Naive thymus-derived CD4-positive, alpha-beta T cell (primary cell): ENCODE measurements at regions of chr6 and their contacts with region 1.

Region 1: GRCh38 chr6:45156075-45156474 is 172.1 kb upstream of the RUNX2 start:
- DNase-seq: peak in 7 of 9 donors; percentile 46 to 81 (median 76)
- ATAC-seq: peak; percentile 96
- H3K4me3 ChIP-seq: no peak overlapping the region
- H3K4me3 Mint-ChIP-seq: peak overlapping the region in 9 of 10 donors; percentile 0 to 63 (median 39)
- H3K27ac ChIP-seq: no peak overlapping the region
- H3K27ac Mint-ChIP-seq: peak overlapping the region in 8 of 9 donors; percentile 27 to 89 (median 60)
- H3K4me1 ChIP-seq: peaks cover 7 to 12% of the 10 kb centered on the region in 2 donors
- H3K4me1 Mint-ChIP-seq: peaks cover 2 to 43% (median 29%) of the 10 kb centered on the region in 7 donors
- H3K27me3 ChIP-seq: no peaks in the 10 kb centered on the region
- H3K27me3 Mint-ChIP-seq: no peaks in the 10 kb centered on the region

Region 2: GRCh38 chr6:44925100-44925739 is 230.9 kb before region 1 on chr6:
- CTCF ChIA-PET with region 1: no interaction called
- POLR2A ChIA-PET with region 1: no interaction called
- intact Hi-C with region 1: loop called in 1 of 2 experiments (anchors 2 kb)
- DNase-seq: peak in 7 of 9 donors; percentile 33 to 82 (median 64)
- ATAC-seq: peak; percentile 95
- H3K4me3 ChIP-seq: peak overlapping the region; percentile 22
- H3K4me3 Mint-ChIP-seq: peak overlapping the region in 9 of 10 donors; percentile 5 to 60 (median 43)
- H3K27ac ChIP-seq: peak overlapping the region; percentile 67
- H3K27ac Mint-ChIP-seq: peak overlapping the region; percentile 22 to 80 (median 51)
- H3K4me1 ChIP-seq: peaks cover 19 to 35% of the 10 kb centered on the region in 2 donors
- H3K4me1 Mint-ChIP-seq: peaks cover 25 to 63% (median 51%) of the 10 kb centered on the region in 7 donors
- H3K27me3 ChIP-seq: no peaks in the 10 kb centered on the region
- H3K27me3 Mint-ChIP-seq: no peaks in the 10 kb centered on the region

Region 3: GRCh38 chr6:45001663-45002062 is 154.4 kb before region 1 on chr6:
- CTCF ChIA-PET with region 1: no interaction called
- POLR2A ChIA-PET with region 1: no interaction called
- intact Hi-C with region 1: loop called in 1 of 2 experiments (anchors 5 kb)
- DNase-seq: peak in 3 of 9 donors; percentile 19 to 22 (median 21)
- ATAC-seq: peak; percentile 74
- H3K4me3 ChIP-seq: no peak overlapping the region
- H3K4me3 Mint-ChIP-seq: peak overlapping the region in 5 of 10 donors; percentile 8 to 49 (median 13)
- H3K27ac ChIP-seq: peak overlapping the region; percentile 2
- H3K27ac Mint-ChIP-seq: peak overlapping the region in 7 of 9 donors; percentile 14 to 87 (median 59)
- H3K4me1 ChIP-seq: peaks cover 4 to 7% of the 10 kb centered on the region in 2 donors
- H3K4me1 Mint-ChIP-seq: peaks cover 7 to 36% (median 26%) of the 10 kb centered on the region in 7 donors
- H3K27me3 ChIP-seq: no peaks in the 10 kb centered on the region
- H3K27me3 Mint-ChIP-seq: no peaks in the 10 kb centered on the region

Region 4: GRCh38 chr6:45116714-45117410 is 39.2 kb before region 1 on chr6:
- CTCF ChIA-PET with region 1: no interaction called
- POLR2A ChIA-PET with region 1: interaction called, 3 read pairs
- intact Hi-C with region 1: loop called in 1 of 2 experiments (anchors 5 kb)
- DNase-seq: no peak
- ATAC-seq: no peak
- H3K4me3 ChIP-seq: no peak overlapping the region
- H3K4me3 Mint-ChIP-seq: peak overlapping the region in 4 of 10 donors; percentile 7 to 28 (median 8)
- H3K27ac ChIP-seq: no peak overlapping the region
- H3K27ac Mint-ChIP-seq: peak overlapping the region in 2 of 9 donors; percentile 6 to 16
- H3K4me1 ChIP-seq: peaks cover 5% of the 10 kb centered on the region in 2 donors
- H3K4me1 Mint-ChIP-seq: peaks cover 10 to 25% (median 21%) of the 10 kb centered on the region in 7 donors
- H3K27me3 ChIP-seq: no peaks in the 10 kb centered on the region
- H3K27me3 Mint-ChIP-seq: no peaks in the 10 kb centered on the region

Region 5: GRCh38 chr6:45310118-45310788 is 154.2 kb after region 1 on chr6:
- CTCF ChIA-PET with region 1: interaction called, 8 read pairs
- POLR2A ChIA-PET with region 1: no interaction called
- intact Hi-C with region 1: loop called in 1 of 2 experiments (anchors 5 kb)
- DNase-seq: peak in 8 of 9 donors; percentile 24 to 71 (median 60)
- ATAC-seq: peak; percentile 76
- H3K4me3 ChIP-seq: peak overlapping the region; percentile 32
- H3K4me3 Mint-ChIP-seq: peak overlapping the region; percentile 63 to 84 (median 80)
- H3K27ac ChIP-seq: peak overlapping the region; percentile 44
- H3K27ac Mint-ChIP-seq: peak overlapping the region; percentile 85 to 95 (median 90)
- H3K4me1 ChIP-seq: peaks cover 14 to 33% of the 10 kb centered on the region in 2 donors
- H3K4me1 Mint-ChIP-seq: peaks cover 39 to 86% (median 78%) of the 10 kb centered on the region in 7 donors
- H3K27me3 ChIP-seq: no peaks in the 10 kb centered on the region
- H3K27me3 Mint-ChIP-seq: no peaks in the 10 kb centered on the region

Region 6: DNA sequence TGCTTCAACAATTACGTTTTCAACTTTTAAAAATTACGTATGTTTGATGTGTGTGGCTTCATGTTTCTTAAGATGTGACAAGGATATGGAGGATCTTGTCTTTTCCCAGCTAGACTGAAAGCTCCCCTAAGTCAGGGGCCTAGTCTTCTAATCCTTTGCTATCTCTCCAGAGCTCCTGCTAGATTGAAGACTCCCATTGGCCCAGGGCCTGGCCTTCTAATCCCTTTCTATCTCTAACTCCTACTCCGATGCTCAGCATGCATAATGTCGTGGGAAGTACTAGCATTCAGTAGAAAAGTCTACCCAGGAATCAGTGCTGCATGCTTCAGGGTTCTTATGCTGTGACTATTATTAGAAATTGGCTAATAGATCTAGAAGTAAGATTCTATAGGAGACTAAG is 366.4 kb after region 1 on chr6:
- CTCF ChIA-PET with region 1: no interaction called
- POLR2A ChIA-PET with region 1: no interaction called
- intact Hi-C with region 1: no loop called
- DNase-seq: no peak
- ATAC-seq: no peak
- H3K4me3 ChIP-seq: no peak overlapping the region
- H3K4me3 Mint-ChIP-seq: no peak overlapping the region
- H3K27ac ChIP-seq: no peak overlapping the region
- H3K27ac Mint-ChIP-seq: no peak overlapping the region
- H3K4me1 ChIP-seq: no peaks in the 10 kb centered on the region
- H3K4me1 Mint-ChIP-seq: peaks cover 8 to 18% (median 15%) of the 10 kb centered on the region in 7 donors
- H3K27me3 ChIP-seq: no peaks in the 10 kb centered on the region
- H3K27me3 Mint-ChIP-seq: no peaks in the 10 kb centered on the region